ENCODE measurements at regions of chr19 and their contacts with region 1.

Region 1: GRCh38 chr19:35154525-35155406 is at the start of gene FXYD5:
- DNase-seq: peak; percentile 74 to 78
- ATAC-seq: peak; percentile 86 to 96 (median 92)
- H3K4me3 ChIP-seq: peak within 1 kb of the TSS; percentile 40 to 88 (median 68)
- H3K27ac ChIP-seq: peak within 1 kb of the TSS in 9 of 10 donors; percentile 14 to 96 (median 80)
- H3K4me1 ChIP-seq: peaks cover 0 to 38% (median 24%) of the 10 kb centered on the region in 9 donors
- H3K27me3 ChIP-seq: peaks cover 0 to 31% (median 17%) of the 10 kb centered on the region in 7 donors
- CTCF ChIP-seq: peak in 2 of 9 donors; percentile 12 to 19
- total RNA-seq, gene FXYD5: 13.9 to 36.6 (median 18.1) TPM

Region 2: DNA sequence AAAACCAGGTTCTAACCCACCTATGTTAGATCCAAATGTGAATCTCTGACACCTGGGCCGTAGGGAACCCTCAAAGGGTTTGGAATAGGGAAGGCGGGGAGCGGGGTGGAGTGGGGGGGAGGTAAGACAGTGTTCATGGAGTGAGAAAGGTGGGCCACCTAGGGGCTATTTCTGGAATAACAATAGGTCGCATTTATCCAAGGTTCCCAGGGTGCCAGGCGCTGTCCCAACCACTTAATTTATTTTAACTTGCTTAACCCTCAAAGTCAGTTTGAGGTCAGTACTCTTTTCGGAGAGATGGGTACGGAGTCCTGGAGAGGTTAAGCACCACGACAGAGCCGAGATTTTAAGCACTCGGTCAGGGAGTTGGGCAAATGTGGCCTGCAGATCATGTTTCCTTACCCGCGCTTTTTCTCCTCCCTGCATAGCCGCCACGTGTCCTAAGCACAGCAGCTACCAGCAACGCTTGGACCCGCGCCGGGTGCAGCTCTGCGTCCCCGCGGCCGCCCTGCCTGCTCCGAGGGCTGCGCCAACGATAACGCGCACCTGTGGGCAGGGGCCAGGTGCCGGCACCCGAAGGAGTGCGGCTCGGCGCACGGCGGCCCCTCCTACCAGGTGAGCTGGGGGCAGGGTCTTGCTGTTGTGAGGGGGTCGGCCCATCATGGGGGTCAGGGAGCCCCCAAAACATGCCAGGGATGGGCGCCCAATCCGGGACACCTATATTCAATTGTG is 64.1 kb before region 1 on chr19:
- intact Hi-C with region 1: no loop called
- DNase-seq: peak in 1 of 2 donors; percentile 57
- ATAC-seq: peak; percentile 74 to 92 (median 86)
- H3K4me3 ChIP-seq: no peak overlapping the region
- H3K27ac ChIP-seq: no peak overlapping the region
- H3K4me1 ChIP-seq: peaks cover 0 to 10% (median 9%) of the 10 kb centered on the region in 9 donors
- H3K27me3 ChIP-seq: peaks cover 0 to 35% (median 13%) of the 10 kb centered on the region in 7 donors
- CTCF ChIP-seq: peak; percentile 43 to 71 (median 67)

Region 3: DNA sequence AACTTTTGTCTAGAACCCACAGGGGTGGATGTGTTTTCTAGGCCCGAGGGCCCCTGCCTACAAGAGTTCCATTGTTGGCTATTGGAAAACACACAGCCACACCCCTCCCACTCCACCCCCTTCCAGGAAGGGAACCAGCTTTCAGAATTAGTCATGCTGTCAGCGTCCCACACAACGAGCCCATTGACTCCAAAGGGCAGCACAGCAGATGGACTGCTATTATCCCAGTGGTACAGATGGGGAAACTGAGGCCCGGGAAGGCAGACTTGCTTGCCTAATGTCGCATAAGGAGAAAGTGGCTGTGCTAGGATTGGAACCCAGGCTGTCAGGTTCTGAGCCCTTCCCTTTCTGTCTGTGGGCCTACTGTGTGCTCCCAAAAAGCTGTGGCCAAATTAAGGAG is 47.2 kb before region 1 on chr19:
- intact Hi-C with region 1: no loop called
- DNase-seq: no peak
- ATAC-seq: peak in 4 of 8 donors; percentile 33 to 61 (median 38)
- H3K4me3 ChIP-seq: no peak overlapping the region
- H3K27ac ChIP-seq: no peak overlapping the region
- H3K4me1 ChIP-seq: peaks cover 0 to 4% (median 0%) of the 10 kb centered on the region in 9 donors
- H3K27me3 ChIP-seq: peaks cover 0 to 3% (median 0%) of the 10 kb centered on the region in 7 donors
- CTCF ChIP-seq: no peak

Region 4: GRCh38 chr19:35213663-35214632 is 59.2 kb after region 1 on chr19:
- intact Hi-C with region 1: loop called in 1 of 10 experiments (anchors 5 kb)
- DNase-seq: peak in 1 of 2 donors; percentile 93
- ATAC-seq: peak; percentile 82 to 92 (median 87)
- H3K4me3 ChIP-seq: peak overlapping the region in 2 of 10 donors; percentile 3 to 14
- H3K27ac ChIP-seq: peak overlapping the region; percentile 21 to 87 (median 70)
- H3K4me1 ChIP-seq: peaks cover 10 to 63% (median 37%) of the 10 kb centered on the region in 9 donors
- H3K27me3 ChIP-seq: no peaks in the 10 kb centered on the region
- CTCF ChIP-seq: no peak

Region 5: GRCh38 chr19:35247526-35248306 is 93.0 kb after region 1 on chr19:
- intact Hi-C with region 1: loop called in 2 of 10 experiments (anchors 5 to 10 kb)
- DNase-seq: peak in 1 of 2 donors; percentile 55
- ATAC-seq: peak; percentile 62 to 87 (median 82)
- H3K4me3 ChIP-seq: peak overlapping the region; percentile 35 to 68 (median 60)
- H3K27ac ChIP-seq: peak overlapping the region; percentile 29 to 87 (median 74)
- H3K4me1 ChIP-seq: peaks cover 0 to 33% (median 17%) of the 10 kb centered on the region in 9 donors
- H3K27me3 ChIP-seq: peaks cover 10 to 53% (median 35%) of the 10 kb centered on the region in 7 donors
- CTCF ChIP-seq: peak in 7 of 9 donors; percentile 28 to 55 (median 39)

Region 6: GRCh38 chr19:35644206-35644986 is 489.6 kb after region 1 on chr19:
- intact Hi-C with region 1: no loop called
- DNase-seq: peak; percentile 94 to 95
- ATAC-seq: peak; percentile 83 to 91 (median 89)
- H3K4me3 ChIP-seq: peak overlapping the region; percentile 30 to 80 (median 62)
- H3K27ac ChIP-seq: peak overlapping the region in 9 of 10 donors; percentile 72 to 92 (median 80)
- H3K4me1 ChIP-seq: peaks cover 9 to 55% (median 33%) of the 10 kb centered on the region in 9 donors
- H3K27me3 ChIP-seq: no peaks in the 10 kb centered on the region
- CTCF ChIP-seq: peak in 2 of 9 donors; percentile 4 to 9

Measured in heart right ventricle (tissue), 16 donors.